Aorta (tissue), 5 donors: ENCODE measurements at regions of chr3 and their contacts with region 1.

Region 1: DNA sequence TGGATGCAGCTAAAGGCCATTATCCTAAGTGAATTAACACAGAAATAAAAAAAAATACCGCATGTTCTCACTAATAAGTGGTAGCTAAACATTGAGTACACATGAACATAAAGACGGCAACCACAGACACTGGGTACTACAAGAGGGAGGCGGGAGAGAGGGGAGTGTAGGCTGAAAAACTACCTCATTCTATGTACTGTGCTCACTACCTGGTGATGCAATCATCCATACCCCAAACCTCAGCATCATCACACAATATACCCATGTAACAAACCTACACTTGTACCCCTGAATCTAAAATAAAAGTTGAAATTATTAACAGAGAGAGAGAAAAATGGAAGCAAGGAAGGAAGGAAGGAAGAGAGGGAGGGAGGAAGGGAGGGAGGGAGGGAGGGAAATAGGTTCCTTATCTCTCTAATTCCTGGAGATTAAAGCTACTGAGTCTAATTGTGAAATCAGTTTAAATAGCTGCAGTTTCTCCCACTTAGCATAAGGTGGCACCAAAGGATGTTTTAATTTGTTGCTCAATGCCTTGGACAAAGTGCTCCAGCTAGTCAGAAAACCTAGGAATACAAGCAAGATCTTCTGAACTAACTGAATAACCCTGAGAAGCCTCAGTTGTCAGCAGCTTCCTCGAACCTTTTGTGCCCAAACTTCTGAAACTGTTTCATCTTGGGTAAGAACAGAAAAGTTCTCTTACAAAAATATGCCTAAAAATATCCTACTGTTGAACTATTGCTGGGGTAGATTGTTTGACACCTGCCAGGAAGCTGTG is 79.4 kb upstream of the ATP11B start:
- DNase-seq: no peak
- ATAC-seq: peak; percentile 76
- H3K4me3 ChIP-seq: no peak overlapping the region
- H3K27ac ChIP-seq: no peak overlapping the region
- H3K4me1 ChIP-seq: no peaks in the 10 kb centered on the region
- H3K27me3 ChIP-seq: no peaks in the 10 kb centered on the region

Region 2: DNA sequence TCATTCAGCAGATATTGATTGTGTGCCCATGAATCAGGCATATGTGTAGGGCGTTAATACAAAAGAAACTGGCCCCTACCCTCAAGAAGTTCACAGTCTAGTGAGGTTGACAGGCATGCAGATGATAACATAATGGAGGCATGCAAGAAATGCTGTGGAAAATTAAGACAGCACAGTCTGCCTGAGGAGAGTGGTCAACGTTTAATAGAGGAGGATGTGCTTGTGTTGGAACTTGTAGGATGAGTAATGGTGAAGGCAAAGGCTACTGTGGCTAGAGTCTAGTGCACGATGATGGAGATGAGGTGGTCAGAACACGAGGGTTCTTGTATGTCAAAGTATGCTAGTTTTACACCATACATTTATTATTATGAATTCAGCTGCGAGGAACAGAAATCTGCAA is 706.5 kb before region 1 on chr3:
- intact Hi-C with region 1: no loop called
- DNase-seq: no peak
- ATAC-seq: no peak
- H3K4me3 ChIP-seq: no peak overlapping the region
- H3K27ac ChIP-seq: no peak overlapping the region
- H3K4me1 ChIP-seq: no peaks in the 10 kb centered on the region
- H3K27me3 ChIP-seq: no peaks in the 10 kb centered on the region

Region 3: DNA sequence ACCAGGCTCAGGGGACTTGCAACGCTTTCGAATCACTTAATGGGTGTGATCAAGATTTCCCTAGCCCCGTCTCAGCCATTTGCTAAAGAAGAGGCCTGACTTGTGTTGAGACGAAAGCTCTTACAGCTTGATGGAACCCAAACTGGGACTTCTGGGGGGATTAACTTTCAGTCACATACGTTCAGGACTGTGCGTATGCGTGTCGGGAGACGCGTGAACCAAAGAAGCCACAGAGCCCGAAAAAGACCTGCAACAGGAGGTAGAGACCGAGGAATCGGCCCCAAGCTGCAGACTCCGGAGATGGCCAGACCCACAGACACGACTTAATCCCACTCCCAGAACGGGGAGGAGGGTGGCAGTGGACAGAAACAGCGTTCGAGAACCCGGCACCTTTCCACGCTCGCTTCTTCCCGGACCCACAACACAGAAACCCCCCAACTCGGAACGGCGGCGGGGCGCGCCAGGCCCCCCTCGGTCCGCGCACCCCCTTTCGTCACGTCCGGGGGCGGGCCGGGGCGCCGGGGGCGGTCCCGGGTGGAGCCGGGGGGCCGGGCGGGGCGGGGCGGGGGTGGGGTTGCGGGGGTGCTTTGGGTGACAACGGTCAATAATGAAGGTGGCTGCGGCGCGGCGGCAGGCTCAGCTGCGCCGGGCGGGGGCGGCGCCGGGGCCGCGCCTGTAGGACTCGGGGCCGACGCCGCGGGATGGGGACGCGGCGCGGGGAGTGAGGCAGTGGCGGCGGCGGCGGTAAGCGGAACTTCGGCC is 79.2 kb after region 1 on chr3 and contains the start of gene ATP11B:
- intact Hi-C with region 1: loop called in 1 of 2 experiments (anchors 10 kb)
- DNase-seq: peak; percentile 78 to 90
- ATAC-seq: peak; percentile 94
- H3K4me3 ChIP-seq: peak within 1 kb of the TSS; percentile 95 to 97
- H3K27ac ChIP-seq: peak within 1 kb of the TSS; percentile 70 to 84
- H3K4me1 ChIP-seq: no peaks in the 10 kb centered on the region
- H3K27me3 ChIP-seq: no peaks in the 10 kb centered on the region
- total RNA-seq, gene ATP11B: 62.5 to 70.3 TPM

Region 4: DNA sequence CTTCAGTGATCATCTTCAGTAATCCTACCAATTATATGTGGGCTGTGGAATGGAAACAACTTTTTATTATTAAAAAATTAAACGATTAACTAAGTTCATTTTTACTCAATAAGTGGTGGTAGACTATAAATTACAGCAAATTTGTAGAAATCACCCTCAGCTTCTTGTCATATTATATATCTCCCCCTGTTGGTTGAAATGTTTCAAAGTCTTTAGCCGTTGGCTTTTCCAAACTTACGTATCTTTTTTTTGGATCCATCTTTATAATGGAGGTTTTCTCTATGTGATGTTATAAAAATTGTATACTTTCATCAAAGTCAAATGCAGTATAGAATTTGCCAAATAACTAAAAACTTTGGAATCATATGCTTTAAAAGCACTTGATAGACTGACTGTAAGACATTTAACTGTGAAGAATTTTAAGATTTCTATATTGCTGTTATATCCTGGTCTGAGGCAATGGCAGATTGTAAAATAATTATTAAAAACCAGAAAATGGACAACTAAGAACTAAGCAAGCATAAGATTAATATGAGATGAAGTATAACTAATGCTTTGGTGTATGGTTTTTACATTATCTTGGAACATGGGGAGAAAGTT is 124.0 kb after region 1 on chr3:
- intact Hi-C with region 1: loop called (anchors 2 to 5 kb)
- DNase-seq: no peak
- ATAC-seq: no peak
- H3K4me3 ChIP-seq: no peak overlapping the region
- H3K27ac ChIP-seq: no peak overlapping the region
- H3K4me1 ChIP-seq: no peaks in the 10 kb centered on the region
- H3K27me3 ChIP-seq: no peaks in the 10 kb centered on the region